GM12878 (cell line): ENCODE measurements at regions of chr12 and their contacts with region 1.

Region 1: DNA sequence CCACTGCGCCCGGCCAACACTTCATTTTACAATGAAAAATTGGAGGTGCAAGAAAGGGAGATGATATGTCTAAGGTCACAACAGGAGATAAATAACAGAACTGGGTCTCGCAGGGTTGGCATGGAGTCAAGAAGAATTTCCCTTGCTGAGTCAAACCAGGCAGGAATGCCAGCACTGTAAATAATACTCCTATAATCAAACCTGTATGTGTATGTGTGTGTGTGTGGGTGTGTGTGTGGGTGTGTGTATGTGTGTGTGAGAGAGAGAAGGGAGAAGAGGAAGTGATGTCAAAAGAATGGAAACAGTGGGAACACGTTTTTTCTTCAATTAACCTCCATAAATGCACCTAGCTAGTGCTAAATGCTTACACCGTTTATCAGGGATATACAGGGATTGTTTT is 70.4 kb downstream of the TMEM116 start:
- DNase-seq: no peak
- ATAC-seq: no peak
- H3K4me3 ChIP-seq: no peak overlapping the region
- H3K27ac ChIP-seq: no peak overlapping the region
- H3K4me1 ChIP-seq: no peaks in the 10 kb centered on the region; the same call in 1 of the 2 replicates
- H3K27me3 ChIP-seq: no peaks in the 10 kb centered on the region
- CTCF ChIP-seq: no peak
- EP300 ChIP-seq: no peak
- POLR2A ChIP-seq: no peak
- RAD21 ChIP-seq: no peak

Region 2: GRCh38 chr12:111858186-111858585 is 84.4 kb before region 1 on chr12:
- CTCF ChIA-PET with region 1: no interaction called
- POLR2A ChIA-PET with region 1: no interaction called
- RAD21 ChIA-PET with region 1: no interaction called
- SMC1A ChIA-PET with region 1: no interaction called
- in situ Hi-C with region 1: no loop called
- intact Hi-C with region 1: no loop called
- DNase-seq: no peak
- ATAC-seq: no peak
- H3K4me3 ChIP-seq: no peak overlapping the region
- H3K27ac ChIP-seq: no peak overlapping the region
- H3K4me1 ChIP-seq: no peaks in the 10 kb centered on the region
- H3K27me3 ChIP-seq: no peaks in the 10 kb centered on the region
- CTCF ChIP-seq: no peak
- EP300 ChIP-seq: no peak
- POLR2A ChIP-seq: no peak
- RAD21 ChIP-seq: no peak

Region 3: DNA sequence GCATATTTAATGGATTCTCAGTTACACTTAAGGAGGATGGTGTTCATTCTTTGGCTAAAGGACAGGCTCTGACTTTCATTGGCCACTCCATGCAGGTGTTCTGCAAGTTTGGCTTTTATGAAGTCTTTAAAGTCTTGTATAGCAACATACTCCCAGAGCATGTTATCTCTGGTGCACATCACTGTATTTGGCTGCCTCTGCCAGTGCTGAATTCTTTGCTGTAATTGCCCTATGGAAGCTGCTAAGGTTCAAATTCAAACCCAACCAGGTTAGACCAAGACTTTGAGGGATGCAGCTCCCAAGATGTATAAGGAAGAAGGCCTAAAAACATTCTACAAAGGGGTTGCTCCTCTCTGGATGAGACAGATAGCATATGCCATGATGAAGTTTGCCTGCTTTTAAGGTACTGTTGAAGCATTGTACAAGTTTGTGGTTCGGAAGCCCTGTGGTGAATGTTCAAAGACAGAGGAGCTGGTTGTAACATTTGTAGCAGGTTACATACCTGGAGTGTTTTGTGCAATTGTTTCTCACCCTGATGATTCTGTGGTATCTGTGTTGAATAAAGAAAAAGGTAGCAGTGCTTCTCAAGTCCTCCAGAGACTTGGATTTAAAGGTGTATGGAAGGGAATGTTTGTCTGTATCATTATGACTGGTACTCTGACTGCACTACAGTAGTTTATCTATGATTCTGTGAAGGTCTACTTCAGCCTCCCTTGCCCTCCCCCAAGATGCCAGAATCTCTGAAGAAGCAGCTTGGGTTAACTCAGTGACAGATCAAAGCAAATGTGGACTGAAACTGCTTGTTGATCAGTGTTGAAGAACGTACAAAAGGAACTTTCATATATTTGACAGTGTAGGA is 51.0 kb after region 1 on chr12:
- CTCF ChIA-PET with region 1: interaction called, 13 read pairs
- POLR2A ChIA-PET with region 1: interaction called, 4 read pairs
- RAD21 ChIA-PET with region 1: interaction called, 6 read pairs
- SMC1A ChIA-PET with region 1: interaction called, 4 read pairs
- in situ Hi-C with region 1: no loop called
- intact Hi-C with region 1: loop called (anchors 5 kb)
- DNase-seq: peak; percentile 43
- ATAC-seq: peak; percentile 85
- H3K4me3 ChIP-seq: peak overlapping the region; percentile 49
- H3K27ac ChIP-seq: no peak overlapping the region
- H3K4me1 ChIP-seq: peaks cover 32% of the 10 kb centered on the region
- H3K27me3 ChIP-seq: no peaks in the 10 kb centered on the region
- CTCF ChIP-seq: no peak
- EP300 ChIP-seq: no peak
- POLR2A ChIP-seq: no peak
- RAD21 ChIP-seq: no peak

Region 4: DNA sequence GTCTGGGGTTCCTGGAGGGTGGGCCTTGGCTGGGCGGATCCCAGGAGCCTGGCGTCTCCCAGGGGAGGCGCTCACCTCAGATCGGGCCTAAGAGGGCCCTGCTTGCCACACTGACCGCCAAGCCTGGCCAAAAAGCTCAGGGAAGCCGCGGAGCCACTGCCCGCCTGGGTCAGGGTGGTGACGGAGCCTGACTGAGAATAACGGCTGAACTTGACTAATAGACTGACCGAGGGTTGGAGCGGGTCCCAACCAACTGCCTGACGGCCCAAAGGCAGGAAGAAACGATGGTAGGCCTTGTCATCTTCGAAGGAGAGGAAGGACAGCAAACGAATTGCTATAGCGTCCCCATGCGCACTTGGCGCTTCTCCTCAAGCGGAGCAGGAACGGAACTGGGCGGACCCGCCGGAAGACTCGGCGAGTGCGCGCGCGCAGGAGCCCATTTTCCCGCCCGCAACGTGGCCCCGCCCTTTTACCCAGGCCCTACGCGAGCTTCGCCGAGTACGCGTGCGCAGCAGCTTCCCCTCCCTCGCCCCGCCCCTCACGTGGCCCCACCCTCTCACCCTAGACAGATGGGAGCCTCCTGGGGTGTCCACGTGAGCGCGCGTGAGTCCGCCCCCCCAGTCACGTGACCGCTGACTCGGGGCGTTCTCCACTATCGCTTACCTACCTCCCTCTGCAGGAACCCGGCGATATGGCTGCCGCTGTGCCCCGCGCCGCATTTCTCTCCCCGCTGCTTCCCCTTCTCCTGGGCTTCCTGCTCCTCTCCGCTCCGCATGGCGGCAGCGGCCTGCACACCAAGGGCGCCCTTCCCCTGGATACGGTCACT is 70.4 kb after region 1 on chr12 and contains the starts of genes ERP29 and TMEM116:
- CTCF ChIA-PET with region 1: interaction called, 40 read pairs
- POLR2A ChIA-PET with region 1: interaction called, 8 read pairs
- RAD21 ChIA-PET with region 1: interaction called, 61 read pairs
- SMC1A ChIA-PET with region 1: interaction called, 24 read pairs
- in situ Hi-C with region 1: loop called (anchors 5 kb)
- intact Hi-C with region 1: loop called (anchors 5 kb)
- DNase-seq: peak; percentile 98
- ATAC-seq: peak; percentile 82
- H3K4me3 ChIP-seq: peak within 1 kb of the TSS; percentile 97
- H3K27ac ChIP-seq: peak within 1 kb of the TSS; percentile 97
- H3K4me1 ChIP-seq: peaks cover 16% of the 10 kb centered on the region; the same call in 1 of the 2 replicates
- H3K27me3 ChIP-seq: no peaks in the 10 kb centered on the region
- CTCF ChIP-seq: peak; percentile 45 to 58 (median 50); a peak in 5 of 6 replicates
- EP300 ChIP-seq: 0 out of 4 replicates have a peak, but pooled peaks of 1 of the 2 experiments have one; percentile 10
- POLR2A ChIP-seq: peak; percentile 89
- RAD21 ChIP-seq: peak; percentile 34
- polyA plus RNA-seq, gene ERP29: 47.1 to 119 TPM
- polyA plus RNA-seq, gene TMEM116: 7.9 to 13.5 TPM

Region 5: DNA sequence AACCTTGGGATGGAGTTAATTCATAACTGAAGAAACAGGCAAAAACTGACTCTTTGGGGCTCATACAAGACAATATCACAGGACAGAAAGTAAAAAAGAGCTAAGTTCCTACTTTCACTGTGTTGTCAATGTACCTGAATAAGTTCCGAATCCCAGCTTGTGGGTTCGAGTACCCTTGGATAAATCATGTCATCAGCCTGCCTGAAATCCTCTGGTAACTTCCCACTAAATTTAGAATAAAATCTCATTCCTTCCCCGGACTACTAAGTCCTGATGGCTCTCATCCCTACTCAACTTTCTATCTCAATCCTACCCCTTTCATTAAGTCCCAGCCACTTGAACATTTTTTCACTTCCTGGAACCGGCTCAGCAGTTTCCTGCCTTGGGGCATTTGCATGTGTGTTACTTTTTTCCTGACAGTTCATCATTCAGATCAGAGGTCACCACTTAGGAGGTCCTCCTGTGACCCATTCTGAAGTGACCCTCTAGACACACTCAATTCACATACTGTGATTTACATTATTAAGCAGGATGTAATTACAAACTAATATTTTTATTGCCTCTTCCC is 83.3 kb after region 1 on chr12:
- CTCF ChIA-PET with region 1: interaction called, 5 read pairs
- POLR2A ChIA-PET with region 1: no interaction called
- RAD21 ChIA-PET with region 1: interaction called, 7 read pairs
- SMC1A ChIA-PET with region 1: interaction called, 5 read pairs
- in situ Hi-C with region 1: no loop called
- intact Hi-C with region 1: loop called (anchors 5 kb)
- DNase-seq: no peak
- ATAC-seq: peak; percentile 60
- H3K4me3 ChIP-seq: no peak overlapping the region
- H3K27ac ChIP-seq: no peak overlapping the region; the same call in 1 of the 2 replicates
- H3K4me1 ChIP-seq: peaks cover 6% of the 10 kb centered on the region
- H3K27me3 ChIP-seq: no peaks in the 10 kb centered on the region
- CTCF ChIP-seq: no peak
- EP300 ChIP-seq: no peak
- POLR2A ChIP-seq: no peak
- RAD21 ChIP-seq: no peak

Region 6: GRCh38 chr12:112046003-112046402 is 103.4 kb after region 1 on chr12:
- CTCF ChIA-PET with region 1: interaction called, 11 read pairs
- POLR2A ChIA-PET with region 1: no interaction called
- RAD21 ChIA-PET with region 1: interaction called, 3 read pairs
- SMC1A ChIA-PET with region 1: interaction called, 6 read pairs
- in situ Hi-C with region 1: no loop called
- intact Hi-C with region 1: no loop called
- DNase-seq: no peak
- ATAC-seq: no peak
- H3K4me3 ChIP-seq: no peak overlapping the region
- H3K27ac ChIP-seq: no peak overlapping the region
- H3K4me1 ChIP-seq: no peaks in the 10 kb centered on the region
- H3K27me3 ChIP-seq: no peaks in the 10 kb centered on the region
- CTCF ChIP-seq: no peak
- EP300 ChIP-seq: no peak
- POLR2A ChIP-seq: no peak
- RAD21 ChIP-seq: no peak

Region 7: DNA sequence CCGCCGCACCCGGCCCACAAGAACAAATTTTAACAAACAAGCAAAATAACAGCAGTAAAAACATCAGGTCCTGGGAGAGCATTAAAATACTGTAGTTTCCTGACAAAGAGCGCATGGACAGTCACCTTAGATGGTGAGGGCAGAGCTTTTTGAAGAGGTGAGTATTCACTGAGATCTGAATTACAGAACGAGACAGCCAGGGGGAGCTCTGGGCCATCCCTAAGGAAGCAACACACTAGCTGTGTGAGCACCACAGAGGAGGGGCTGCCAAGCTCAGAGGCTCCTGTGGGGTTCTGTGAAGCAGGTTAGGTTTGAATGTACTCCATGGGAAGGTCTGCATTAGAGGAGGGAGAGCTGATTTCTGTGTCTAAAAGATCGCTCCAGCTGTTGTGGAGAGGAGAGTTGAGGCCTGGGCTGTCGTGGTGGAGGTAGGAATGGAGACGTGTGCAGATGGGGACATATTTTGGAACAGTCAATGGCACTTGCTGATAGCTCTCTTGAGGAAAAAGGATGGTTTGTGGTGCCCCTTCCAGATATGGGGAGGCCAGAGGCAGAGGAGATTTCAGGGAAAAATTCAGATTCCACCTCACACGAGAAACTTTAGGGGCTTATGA is 255.7 kb after region 1 on chr12:
- CTCF ChIA-PET with region 1: interaction called, 14 read pairs
- POLR2A ChIA-PET with region 1: interaction called, 5 read pairs
- RAD21 ChIA-PET with region 1: interaction called, 11 read pairs
- SMC1A ChIA-PET with region 1: interaction called, 3 read pairs
- in situ Hi-C with region 1: no loop called
- intact Hi-C with region 1: no loop called
- DNase-seq: no peak
- ATAC-seq: peak; percentile 99
- H3K4me3 ChIP-seq: no peak overlapping the region
- H3K27ac ChIP-seq: no peak overlapping the region
- H3K4me1 ChIP-seq: no peaks in the 10 kb centered on the region
- H3K27me3 ChIP-seq: no peaks in the 10 kb centered on the region
- CTCF ChIP-seq: peak; percentile 67 to 72 (median 71)
- EP300 ChIP-seq: no peak
- POLR2A ChIP-seq: no peak
- RAD21 ChIP-seq: peak; percentile 76